ENCODE measurements at regions of chr1 and their contacts with region 1.

Region 1: GRCh38 chr1:201119206-201120197 is 7.3 kb upstream of the CACNA1S start:
- DNase-seq: peak; percentile 53
- H3K4me3 Mint-ChIP-seq: no peak overlapping the region
- H3K27ac Mint-ChIP-seq: no peak overlapping the region
- H3K4me1 Mint-ChIP-seq: peaks cover 7% of the 10 kb centered on the region
- H3K27me3 Mint-ChIP-seq: peaks cover 28% of the 10 kb centered on the region

Region 2: GRCh38 chr1:201108614-201109013 is 10.9 kb before region 1 on chr1:
- CTCF ChIA-PET with region 1: interaction called, 12 read pairs
- POLR2A ChIA-PET with region 1: no interaction called
- DNase-seq: no peak
- H3K4me3 Mint-ChIP-seq: no peak overlapping the region
- H3K27ac Mint-ChIP-seq: no peak overlapping the region
- H3K4me1 Mint-ChIP-seq: no peaks in the 10 kb centered on the region
- H3K27me3 Mint-ChIP-seq: peaks cover 6% of the 10 kb centered on the region

Measured in activated CD4-positive, alpha-beta T cell treated with anti-CD3 and anti-CD28 coated beads, Interleukin-2, amount 10 ng/mL, durations not matched to agents 7 days and 5 days (primary cell).